Activated B cell treated with CpG ODN at 0.5 μM for 24 hours (primary cell): ENCODE measurements at regions of chr10 and their contacts with region 1.

Region 1: DNA sequence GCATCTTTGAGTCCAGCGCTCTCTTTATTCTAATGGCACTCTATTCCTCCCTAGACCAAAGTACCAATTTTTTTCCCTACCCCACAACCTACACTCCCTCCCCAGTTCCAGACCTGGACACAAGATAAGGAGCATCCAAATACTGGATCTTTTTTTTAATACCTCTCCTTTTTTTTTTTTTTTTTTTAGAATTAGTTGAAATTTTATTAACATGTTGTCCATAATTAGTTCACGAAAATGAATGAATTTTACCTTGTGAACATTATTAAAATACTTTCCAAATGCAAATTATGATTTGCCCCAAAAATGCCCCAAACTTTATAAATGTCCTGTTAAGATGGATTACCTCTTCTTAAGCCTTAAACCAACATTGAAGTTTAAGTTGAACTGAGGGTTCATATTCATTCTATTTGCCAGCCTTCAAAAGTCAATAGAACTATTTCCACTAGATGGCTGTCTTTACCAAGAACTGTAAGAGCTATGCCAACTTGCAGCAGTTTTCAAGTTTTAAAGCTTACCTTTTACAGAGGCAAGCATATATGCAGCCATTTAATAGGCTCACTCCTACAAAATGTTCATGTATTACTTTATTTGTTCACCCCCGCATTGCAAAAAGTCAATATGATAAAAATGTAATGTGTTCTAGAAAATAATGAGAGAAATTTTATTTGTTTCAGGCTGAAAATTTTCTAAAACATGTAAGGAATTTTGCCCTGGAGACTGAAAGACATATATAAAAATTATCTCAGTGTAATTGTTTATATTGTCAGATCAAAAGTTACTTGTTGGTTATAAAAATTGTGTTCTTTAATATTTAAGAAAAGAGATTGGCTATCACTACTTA is 39.7 kb upstream of the TNKS2 start:
- DNase-seq: no peak
- ATAC-seq: peak; percentile 28
- H3K4me3 Mint-ChIP-seq: no peak overlapping the region
- H3K27ac Mint-ChIP-seq: no peak overlapping the region
- H3K4me1 Mint-ChIP-seq: no peaks in the 10 kb centered on the region
- H3K27me3 Mint-ChIP-seq: peaks cover 15% of the 10 kb centered on the region
- CTCF ChIP-seq: no peak

Region 2: GRCh38 chr10:91820144-91820543 is 61.6 kb after region 1 on chr10:
- CTCF ChIA-PET with region 1: no interaction called
- POLR2A ChIA-PET with region 1: no interaction called
- intact Hi-C with region 1: loop called (anchors 5 kb)
- DNase-seq: no peak
- ATAC-seq: no peak
- H3K4me3 Mint-ChIP-seq: no peak overlapping the region
- H3K27ac Mint-ChIP-seq: no peak overlapping the region
- H3K4me1 Mint-ChIP-seq: no peaks in the 10 kb centered on the region
- H3K27me3 Mint-ChIP-seq: no peaks in the 10 kb centered on the region
- CTCF ChIP-seq: no peak

Region 3: DNA sequence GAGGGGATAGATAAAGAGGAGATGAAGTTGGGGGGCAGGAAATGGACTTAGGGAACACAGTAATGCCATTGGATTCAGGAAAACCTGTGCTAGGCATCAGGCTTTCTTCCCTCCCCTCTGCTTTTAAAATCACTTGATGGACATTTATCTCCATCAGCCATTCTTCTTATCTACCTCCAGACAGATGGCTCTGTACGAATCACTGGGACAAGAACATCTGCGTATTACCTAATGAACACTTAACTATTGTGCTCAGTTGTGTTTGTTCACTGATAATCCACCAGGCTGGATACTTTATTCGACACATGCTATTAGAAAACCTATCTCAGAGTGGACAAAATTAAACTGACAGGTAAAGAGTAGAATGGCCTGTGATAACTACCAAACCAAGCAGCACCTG is 79.7 kb after region 1 on chr10:
- CTCF ChIA-PET with region 1: no interaction called
- POLR2A ChIA-PET with region 1: no interaction called
- intact Hi-C with region 1: loop called (anchors 5 kb)
- DNase-seq: no peak
- ATAC-seq: no peak
- H3K4me3 Mint-ChIP-seq: no peak overlapping the region
- H3K27ac Mint-ChIP-seq: no peak overlapping the region
- H3K4me1 Mint-ChIP-seq: no peaks in the 10 kb centered on the region
- H3K27me3 Mint-ChIP-seq: no peaks in the 10 kb centered on the region
- CTCF ChIP-seq: no peak

Region 4: DNA sequence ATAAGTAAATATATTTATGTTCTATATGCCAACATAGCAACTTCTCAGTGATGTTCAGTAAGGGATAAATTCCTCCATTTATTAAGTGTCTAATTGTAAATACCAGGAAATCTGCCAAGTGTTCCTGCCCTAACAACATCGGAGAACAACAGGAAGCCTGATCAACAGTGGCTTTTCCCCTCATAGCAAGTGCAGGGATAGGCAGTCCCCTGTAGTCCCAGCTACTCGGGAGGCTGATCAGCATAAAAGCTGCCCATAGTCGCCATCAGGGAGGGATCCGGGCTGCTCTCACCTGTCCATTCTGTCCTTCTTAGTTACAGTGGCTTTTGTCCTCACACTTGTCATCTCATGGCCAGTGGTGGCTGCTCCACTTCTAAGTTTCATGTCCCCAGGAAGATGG is 674.1 kb after region 1 on chr10:
- CTCF ChIA-PET with region 1: no interaction called
- POLR2A ChIA-PET with region 1: no interaction called
- intact Hi-C with region 1: loop called (anchors 2 kb)
- DNase-seq: no peak
- ATAC-seq: no peak
- H3K4me3 Mint-ChIP-seq: no peak overlapping the region
- H3K27ac Mint-ChIP-seq: no peak overlapping the region
- H3K4me1 Mint-ChIP-seq: no peaks in the 10 kb centered on the region
- H3K27me3 Mint-ChIP-seq: no peaks in the 10 kb centered on the region
- CTCF ChIP-seq: no peak